Psoas muscle (tissue), 8 donors: ENCODE measurements at regions of chr3 and their contacts with region 1.

Region 1: GRCh38 chr3:47678446-47679338 is 100.0 kb upstream of the CSPG5 start:
- DNase-seq: no peak
- ATAC-seq: no peak
- H3K4me3 ChIP-seq: no peak overlapping the region
- H3K27ac ChIP-seq: no peak overlapping the region
- H3K4me1 ChIP-seq: no peaks in the 10 kb centered on the region
- H3K27me3 ChIP-seq: no peaks in the 10 kb centered on the region
- CTCF ChIP-seq: no peak

Region 2: GRCh38 chr3:47711596-47711995 is 32.9 kb after region 1 on chr3:
- intact Hi-C with region 1: loop called in 1 of 2 experiments (anchors 5 kb)
- DNase-seq: no peak
- ATAC-seq: no peak
- H3K4me3 ChIP-seq: no peak overlapping the region
- H3K27ac ChIP-seq: no peak overlapping the region
- H3K4me1 ChIP-seq: peaks cover 3% of the 10 kb centered on the region
- H3K27me3 ChIP-seq: no peaks in the 10 kb centered on the region
- CTCF ChIP-seq: no peak